Pancreas (tissue), 10 donors: ENCODE measurements at regions of chr11 and their contacts with region 1.

Region 1: GRCh38 chr11:112280268-112281126 is 19.8 kb upstream of the PLET1 start:
- DNase-seq: peak; percentile 36 to 66 (median 57)
- ATAC-seq: peak; percentile 95 to 98 (median 98)
- H3K4me3 ChIP-seq: peak overlapping the region in 3 of 4 donors; percentile 27 to 52 (median 33)
- H3K27ac ChIP-seq: no peak overlapping the region
- H3K4me1 ChIP-seq: no peaks in the 10 kb centered on the region
- H3K27me3 ChIP-seq: no peaks in the 10 kb centered on the region
- CTCF ChIP-seq: peak; percentile 52 to 67 (median 58)

Region 2: DNA sequence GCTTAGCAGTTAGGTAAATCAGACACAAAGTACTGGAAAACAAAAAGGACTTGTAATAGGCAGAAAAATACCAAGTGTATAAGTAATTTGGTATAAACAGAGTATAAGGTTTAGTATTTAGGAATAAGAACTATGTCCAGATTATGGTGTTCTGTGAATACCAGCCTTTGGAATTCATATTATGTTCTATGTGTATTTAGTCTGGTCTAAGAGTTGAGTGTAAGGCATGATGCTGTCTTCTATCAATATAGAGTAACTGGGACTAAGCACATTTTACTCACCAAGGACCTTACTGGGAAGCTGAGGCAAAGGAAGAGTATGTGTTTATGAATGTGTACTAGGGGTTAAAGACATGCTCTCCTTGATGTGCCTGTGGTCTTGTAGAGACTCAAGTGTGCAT is 184.3 kb before region 1 on chr11:
- intact Hi-C with region 1: loop called in 1 of 3 experiments (anchors 10 kb)
- DNase-seq: no peak
- ATAC-seq: no peak
- H3K4me3 ChIP-seq: no peak overlapping the region
- H3K27ac ChIP-seq: no peak overlapping the region
- H3K4me1 ChIP-seq: no peaks in the 10 kb centered on the region
- H3K27me3 ChIP-seq: no peaks in the 10 kb centered on the region
- CTCF ChIP-seq: no peak

Region 3: GRCh38 chr11:112219476-112220232 is 60.8 kb before region 1 on chr11:
- intact Hi-C with region 1: loop called in 2 of 3 experiments (anchors 2 kb)
- DNase-seq: peak in 3 of 6 donors; percentile 17 to 58 (median 28)
- ATAC-seq: peak; percentile 95 to 100 (median 98)
- H3K4me3 ChIP-seq: no peak overlapping the region
- H3K27ac ChIP-seq: no peak overlapping the region
- H3K4me1 ChIP-seq: no peaks in the 10 kb centered on the region
- H3K27me3 ChIP-seq: no peaks in the 10 kb centered on the region
- CTCF ChIP-seq: peak; percentile 52 to 73 (median 61)

Region 4: DNA sequence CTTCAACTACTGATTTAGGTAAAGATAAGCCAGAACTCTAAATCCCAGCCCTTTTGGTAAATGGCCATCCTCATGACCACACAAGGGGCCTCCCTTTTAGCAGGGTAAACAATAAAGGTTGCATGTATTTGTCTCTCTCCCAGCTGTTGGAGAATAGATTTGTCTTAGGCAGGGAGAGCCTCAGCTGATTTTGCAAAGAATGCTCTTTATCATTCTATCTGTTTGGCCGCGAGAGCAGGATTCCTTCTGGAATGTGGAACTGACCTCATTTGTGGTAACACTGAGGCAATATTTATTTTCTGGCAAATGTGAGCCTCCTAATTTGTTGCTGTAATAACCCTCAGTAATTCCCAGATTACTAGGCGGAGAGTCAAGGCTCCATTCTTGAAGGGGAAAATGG is 39.0 kb before region 1 on chr11:
- intact Hi-C with region 1: no loop called
- DNase-seq: no peak
- ATAC-seq: peak in 3 of 4 donors; percentile 67 to 71 (median 70)
- H3K4me3 ChIP-seq: no peak overlapping the region
- H3K27ac ChIP-seq: no peak overlapping the region
- H3K4me1 ChIP-seq: no peaks in the 10 kb centered on the region
- H3K27me3 ChIP-seq: no peaks in the 10 kb centered on the region
- CTCF ChIP-seq: no peak